Mammary epithelial cell (primary cell): ENCODE measurements at regions of chr7 and their contacts with region 1.

Region 1: DNA sequence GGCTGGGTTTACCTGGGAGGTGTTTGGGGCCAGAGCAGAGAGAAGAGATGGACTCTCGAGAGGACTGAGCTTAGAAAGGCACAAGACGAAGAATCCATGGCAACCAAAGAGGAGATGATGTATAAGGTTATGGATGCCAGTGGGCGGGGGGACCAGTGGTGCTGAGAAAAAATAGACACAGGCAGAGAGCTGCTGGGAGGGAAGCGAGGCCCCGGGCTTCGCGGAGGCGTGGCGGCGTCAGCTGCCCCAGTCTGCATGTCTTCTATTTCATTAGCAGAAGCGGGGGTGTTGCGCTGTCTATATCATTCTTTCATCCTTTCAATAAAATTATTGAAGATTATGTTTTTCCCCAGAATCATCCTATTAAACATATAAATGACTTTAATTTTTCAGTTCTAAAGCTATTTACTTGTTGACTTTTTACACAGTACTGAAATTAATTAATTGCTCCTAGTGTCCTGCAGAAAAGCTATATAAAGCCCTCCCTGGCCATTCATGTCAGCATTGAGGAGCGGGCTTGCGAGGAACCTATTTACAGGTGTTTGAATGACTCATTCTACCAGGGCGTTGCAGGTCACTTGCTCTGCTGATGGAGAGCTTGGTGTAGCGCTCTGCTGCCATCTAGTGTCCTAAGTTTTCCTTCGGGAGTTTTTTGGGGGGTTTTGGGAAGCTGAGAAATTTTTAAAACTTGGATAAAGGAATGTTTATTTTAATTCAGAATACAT is 42.9 kb upstream of the BHLHA15 start:
- DNase-seq: peak; percentile 64
- H3K4me3 ChIP-seq: no peak overlapping the region
- H3K27ac ChIP-seq: no peak overlapping the region
- H3K4me1 ChIP-seq: peaks cover 19% of the 10 kb centered on the region
- H3K27me3 ChIP-seq: no peaks in the 10 kb centered on the region
- CTCF ChIP-seq: peak; percentile 63 to 84

Region 2: GRCh38 chr7:98119256-98119918 is 49.0 kb before region 1 on chr7:
- CTCF ChIA-PET with region 1: interaction called, 3 read pairs
- dilution Hi-C with region 1: loop called (anchors 5 kb)
- in situ Hi-C with region 1: no loop called
- intact Hi-C with region 1: no loop called
- DNase-seq: peak; percentile 72
- H3K4me3 ChIP-seq: peak overlapping the region in 2 of 3 experiments; percentile 2 to 8
- H3K27ac ChIP-seq: peak overlapping the region; percentile 79
- H3K4me1 ChIP-seq: peaks cover 23% of the 10 kb centered on the region
- H3K27me3 ChIP-seq: no peaks in the 10 kb centered on the region
- CTCF ChIP-seq: no peak

Region 3: DNA sequence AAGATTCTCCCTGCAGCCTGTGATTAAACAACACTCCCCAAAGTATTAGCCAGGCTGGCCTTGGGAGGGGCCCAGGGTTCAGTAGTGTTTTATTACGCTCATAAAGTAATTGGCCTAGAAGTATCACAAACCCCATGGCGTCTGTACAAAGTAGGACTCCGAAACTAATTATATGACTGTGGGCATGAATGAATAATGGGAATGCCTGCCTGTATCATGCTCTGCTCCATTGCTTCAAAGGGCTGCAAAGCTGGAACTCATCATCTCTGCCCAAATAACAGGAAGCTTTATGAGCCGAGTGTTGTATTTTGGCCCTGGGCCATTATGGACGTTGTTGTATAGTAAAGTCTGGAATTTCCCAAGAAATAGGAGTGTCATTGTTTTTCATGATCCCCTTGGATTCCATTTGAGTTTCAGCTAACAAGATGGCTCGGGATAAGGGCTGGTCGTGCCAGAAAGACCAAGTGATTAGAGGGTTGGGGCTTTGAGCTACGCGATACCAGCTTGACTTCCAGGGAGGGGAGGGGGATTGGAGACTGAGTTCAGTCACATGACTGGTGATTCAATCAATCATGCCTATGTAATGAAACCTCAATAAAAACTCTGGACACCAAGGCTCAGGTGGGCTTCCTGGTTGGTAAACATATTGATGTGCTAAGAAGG is 383.4 kb after region 1 on chr7:
- CTCF ChIA-PET with region 1: no interaction called
- dilution Hi-C with region 1: no loop called
- in situ Hi-C with region 1: no loop called
- intact Hi-C with region 1: no loop called
- DNase-seq: no peak
- H3K4me3 ChIP-seq: no peak overlapping the region
- H3K27ac ChIP-seq: no peak overlapping the region
- H3K4me1 ChIP-seq: no peaks in the 10 kb centered on the region
- H3K27me3 ChIP-seq: no peaks in the 10 kb centered on the region
- CTCF ChIP-seq: no peak